ENCODE measurements at regions of chr3 and their contacts with region 1.

Region 1: GRCh38 chr3:142929109-142929508 is 34.4 kb downstream of the PAQR9 start:
- DNase-seq: peak; percentile 35
- ATAC-seq: peak; percentile 95
- H3K4me3 ChIP-seq: no peak overlapping the region
- H3K27ac ChIP-seq: no peak overlapping the region
- H3K4me1 ChIP-seq: no peaks in the 10 kb centered on the region
- H3K27me3 ChIP-seq: no peaks in the 10 kb centered on the region; the same call in 1 of the 2 replicates
- CTCF ChIP-seq: peak; percentile 91

Region 2: DNA sequence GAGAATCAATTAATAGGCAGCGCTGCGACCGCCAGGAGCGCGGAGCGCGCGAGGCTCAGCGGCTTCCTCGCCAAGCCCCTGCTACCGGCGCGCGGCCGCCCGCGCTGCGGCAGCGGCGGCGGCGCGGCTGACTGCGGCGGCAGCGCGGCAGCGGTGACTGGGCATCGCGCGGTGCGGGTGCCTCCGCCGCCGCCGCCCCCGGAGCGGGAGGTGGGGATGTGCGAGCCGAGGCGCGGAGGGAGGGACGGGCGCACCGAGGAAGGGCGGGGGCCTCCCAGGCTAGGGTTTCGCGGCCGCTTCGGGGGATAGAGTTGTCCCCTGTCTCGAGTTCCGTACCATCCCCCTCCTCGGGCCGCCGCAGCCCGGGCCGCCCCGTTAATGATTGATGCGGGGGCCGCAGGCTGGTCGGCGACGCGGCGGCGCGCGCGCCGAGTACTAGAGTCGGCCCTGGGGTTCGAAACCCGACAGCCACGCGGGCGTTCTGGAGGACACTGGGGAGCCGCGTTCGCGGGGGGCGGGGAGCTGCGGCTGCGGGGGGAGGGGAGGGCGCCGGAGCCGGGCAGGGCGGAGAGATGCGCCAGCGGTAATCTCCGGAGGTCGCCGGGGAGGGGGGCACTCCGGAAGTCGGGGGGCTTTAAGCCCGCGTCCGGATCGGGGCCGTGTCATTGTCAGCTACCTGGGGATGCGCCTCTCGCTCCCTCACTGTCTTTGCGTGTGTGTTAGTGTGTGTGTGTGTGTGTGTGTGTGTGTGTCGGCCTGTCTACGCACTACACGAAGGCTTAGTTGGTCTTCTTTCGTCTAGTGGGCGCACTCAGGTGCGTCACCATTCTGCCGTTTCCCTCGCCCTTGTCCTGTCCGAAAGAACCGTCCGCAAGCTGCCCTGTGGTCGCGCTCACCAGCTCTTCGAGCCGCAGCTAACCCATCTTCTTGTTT is 34.7 kb after region 1 on chr3 and contains the start of gene PAQR9:
- CTCF ChIA-PET with region 1: interaction called, 18 read pairs
- POLR2A ChIA-PET with region 1: no interaction called
- in situ Hi-C with region 1: no loop called
- intact Hi-C with region 1: no loop called
- DNase-seq: no peak
- ATAC-seq: peak; percentile 81
- H3K4me3 ChIP-seq: peak within 1 kb of the TSS; percentile 52 to 55
- H3K27ac ChIP-seq: no peak within 1 kb of the TSS
- H3K4me1 ChIP-seq: peaks cover under 1% of the 10 kb centered on the region; the same call in 1 of the 2 replicates
- H3K27me3 ChIP-seq: peaks cover 10% of the 10 kb centered on the region
- CTCF ChIP-seq: peak; percentile 19; the same call in 1 of the 2 replicates
- total RNA-seq, gene PAQR9: 0.36 TPM

Region 3: DNA sequence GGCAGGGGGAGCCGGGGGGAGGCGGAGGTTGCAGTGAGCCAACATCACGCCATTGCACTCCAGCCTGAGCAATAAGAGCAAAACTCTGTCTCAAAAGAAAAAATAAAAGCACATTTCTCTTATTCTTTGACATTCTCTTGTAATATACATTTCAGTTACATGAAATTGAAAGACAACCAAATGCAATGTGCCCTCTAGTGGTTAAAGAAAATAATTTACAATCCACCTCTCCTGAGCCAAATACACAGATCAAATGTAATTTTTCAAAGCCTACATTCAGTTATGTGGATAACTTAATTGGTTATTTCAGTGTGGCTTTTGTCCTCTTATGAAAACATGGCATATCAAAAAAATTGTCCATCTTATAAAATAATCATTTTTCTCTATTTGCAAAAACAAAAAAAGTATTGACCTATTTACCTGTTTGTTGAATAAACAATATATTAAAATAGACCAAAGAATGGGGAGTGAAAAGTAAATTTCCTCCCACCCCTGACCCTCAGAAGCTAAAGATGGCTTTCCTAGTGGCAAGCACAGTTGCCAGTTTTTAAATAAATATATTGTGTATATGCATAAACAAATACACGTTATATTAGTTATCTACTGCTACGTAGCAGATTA is 58.1 kb after region 1 on chr3:
- CTCF ChIA-PET with region 1: interaction called, 3 read pairs
- POLR2A ChIA-PET with region 1: no interaction called
- in situ Hi-C with region 1: no loop called
- intact Hi-C with region 1: loop called (anchors 2 kb)
- DNase-seq: no peak
- ATAC-seq: peak; percentile 82
- H3K4me3 ChIP-seq: no peak overlapping the region
- H3K27ac ChIP-seq: no peak overlapping the region
- H3K4me1 ChIP-seq: no peaks in the 10 kb centered on the region
- H3K27me3 ChIP-seq: no peaks in the 10 kb centered on the region
- CTCF ChIP-seq: peak; percentile 82

Region 4: GRCh38 chr3:142993958-142994442 is 64.9 kb after region 1 on chr3:
- CTCF ChIA-PET with region 1: no interaction called
- POLR2A ChIA-PET with region 1: no interaction called
- in situ Hi-C with region 1: no loop called
- intact Hi-C with region 1: loop called (anchors 1 kb)
- DNase-seq: no peak
- ATAC-seq: peak; percentile 74; the same call in 1 of the 2 replicates
- H3K4me3 ChIP-seq: no peak overlapping the region
- H3K27ac ChIP-seq: no peak overlapping the region
- H3K4me1 ChIP-seq: peaks cover 25% of the 10 kb centered on the region
- H3K27me3 ChIP-seq: no peaks in the 10 kb centered on the region
- CTCF ChIP-seq: peak; percentile 89

Measured in Panc1 (cell line).